ENCODE measurements at regions of chr9 and their contacts with region 1.

Region 1: GRCh38 chr9:69223605-69224004 is 49.5 kb downstream of the TJP2 start:
- DNase-seq: no peak
- ATAC-seq: no peak
- H3K4me3 Mint-ChIP-seq: no peak overlapping the region
- H3K27ac Mint-ChIP-seq: no peak overlapping the region
- H3K4me1 Mint-ChIP-seq: no peaks in the 10 kb centered on the region
- H3K27me3 Mint-ChIP-seq: no peaks in the 10 kb centered on the region
- CTCF ChIP-seq: no peak

Region 2: GRCh38 chr9:69104830-69105527 is 118.6 kb before region 1 on chr9:
- CTCF ChIA-PET with region 1: no interaction called
- POLR2A ChIA-PET with region 1: interaction called, 12 read pairs
- intact Hi-C with region 1: no loop called
- DNase-seq: no peak
- ATAC-seq: no peak
- H3K4me3 Mint-ChIP-seq: no peak overlapping the region
- H3K27ac Mint-ChIP-seq: no peak overlapping the region
- H3K4me1 Mint-ChIP-seq: no peaks in the 10 kb centered on the region
- H3K27me3 Mint-ChIP-seq: no peaks in the 10 kb centered on the region
- CTCF ChIP-seq: no peak

Measured in activated B cell treated with CpG ODN at 0.5 μM for 24 hours (primary cell).